Gastrocnemius medialis (tissue), 4 donors: ENCODE measurements at regions of chr4 and their contacts with region 1.

Region 1: DNA sequence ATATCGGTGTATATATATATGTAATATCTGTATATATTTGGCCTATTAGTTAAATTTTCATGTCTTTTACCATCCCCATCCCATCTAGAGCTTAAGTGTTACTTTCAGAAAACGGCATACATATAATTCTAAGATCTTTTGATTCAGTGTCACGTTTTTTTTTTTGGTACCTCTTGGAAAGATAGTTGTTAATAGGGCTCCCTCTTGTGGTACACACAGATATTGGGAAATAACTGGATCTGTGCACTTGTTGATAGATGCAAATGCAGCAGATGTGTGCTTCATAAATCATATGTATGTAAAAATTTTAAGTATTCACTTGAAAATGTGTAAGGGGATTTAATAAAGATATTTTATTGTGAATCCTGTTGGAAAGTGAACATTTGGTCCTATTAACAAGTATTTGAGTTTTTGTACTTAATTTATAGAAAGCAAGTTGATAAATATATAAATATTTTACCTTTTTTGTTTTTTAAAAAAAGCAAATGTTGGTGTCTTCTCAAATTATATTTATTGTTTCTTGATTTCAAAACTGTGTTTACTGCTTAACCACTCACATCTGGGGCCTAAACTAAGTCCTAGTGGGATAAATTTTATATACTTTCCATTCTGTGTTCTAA is 74.7 kb downstream of the PAQR3 start:
- DNase-seq: no peak
- ATAC-seq: peak; percentile 65 to 66
- H3K4me3 ChIP-seq: no peak overlapping the region
- H3K27ac ChIP-seq: no peak overlapping the region
- H3K4me1 ChIP-seq: no peaks in the 10 kb centered on the region
- H3K27me3 ChIP-seq: no peaks in the 10 kb centered on the region
- CTCF ChIP-seq: peak; percentile 63 to 80 (median 71)
- POLR2A ChIP-seq: no peak

Region 2: DNA sequence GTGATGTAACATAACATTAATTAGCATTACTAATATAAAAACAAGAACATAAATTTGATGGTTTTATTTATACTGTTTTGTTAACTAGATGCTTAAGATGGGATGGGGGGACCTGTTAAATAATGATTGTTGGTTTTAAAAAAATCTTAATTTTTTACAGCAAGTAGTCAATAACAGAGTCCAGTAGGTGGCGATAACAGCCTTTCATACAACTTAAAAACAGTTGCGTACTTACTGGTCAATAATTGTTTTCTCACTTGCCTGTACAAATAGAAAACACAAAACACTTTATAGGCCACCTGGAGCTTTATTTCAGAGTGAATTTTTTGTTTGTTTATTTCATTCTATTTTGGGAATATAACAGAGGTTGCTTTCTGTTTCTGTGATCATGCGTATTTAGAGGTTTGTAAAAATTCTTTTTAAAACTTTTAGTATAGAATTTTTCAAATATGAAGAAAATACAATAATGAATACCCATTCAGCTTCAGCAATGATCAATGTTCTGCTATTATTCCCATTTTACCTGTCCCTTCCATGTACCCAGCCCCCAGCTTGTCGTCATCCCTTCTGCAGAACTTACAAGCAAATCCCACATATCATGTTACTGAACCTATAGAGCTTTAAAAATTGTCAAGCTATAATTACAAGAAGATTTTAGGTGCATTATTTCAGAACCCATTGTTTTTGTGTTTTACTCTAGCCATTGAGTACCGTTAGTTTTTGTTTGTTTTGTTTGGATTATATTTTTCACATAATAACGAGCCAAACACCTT is 904.8 kb before region 1 on chr4:
- in situ Hi-C with region 1: loop called in 3 of 4 experiments (anchors 25 kb)
- intact Hi-C with region 1: loop called (anchors 5 kb)
- DNase-seq: no peak
- ATAC-seq: peak in 1 of 2 donors; percentile 62
- H3K4me3 ChIP-seq: peak overlapping the region; percentile 9 to 50 (median 41)
- H3K27ac ChIP-seq: no peak overlapping the region
- H3K4me1 ChIP-seq: peaks cover 0 to 7% of the 10 kb centered on the region in 2 donors
- H3K27me3 ChIP-seq: no peaks in the 10 kb centered on the region
- CTCF ChIP-seq: peak; percentile 46 to 73 (median 66)
- POLR2A ChIP-seq: no peak

Region 3: DNA sequence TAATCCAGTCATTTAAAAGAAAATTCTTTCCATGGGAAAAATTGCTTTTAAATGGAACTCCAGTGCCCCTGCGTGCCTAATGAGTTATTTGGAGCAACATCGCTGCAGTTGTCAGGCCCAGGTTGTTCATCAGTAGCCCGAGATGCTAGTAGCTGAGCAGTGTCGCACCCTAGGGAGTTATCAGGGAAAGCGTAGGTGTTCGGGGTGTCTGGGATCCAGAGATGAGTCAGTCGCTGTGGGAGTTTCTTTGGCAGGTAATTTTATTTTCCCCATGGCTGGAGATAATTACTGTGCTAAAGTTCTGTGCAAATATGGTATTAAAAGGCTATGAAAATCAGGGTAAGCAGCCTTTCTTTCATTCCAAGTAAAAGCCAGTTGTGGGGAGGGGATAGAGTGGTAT is 263.5 kb before region 1 on chr4:
- in situ Hi-C with region 1: loop called in 1 of 4 experiments (anchors 10 kb)
- intact Hi-C with region 1: no loop called
- DNase-seq: no peak
- ATAC-seq: no peak
- H3K4me3 ChIP-seq: no peak overlapping the region
- H3K27ac ChIP-seq: no peak overlapping the region
- H3K4me1 ChIP-seq: no peaks in the 10 kb centered on the region
- H3K27me3 ChIP-seq: no peaks in the 10 kb centered on the region
- CTCF ChIP-seq: no peak
- POLR2A ChIP-seq: no peak

Region 4: GRCh38 chr4:78612398-78613178 is 251.9 kb before region 1 on chr4:
- in situ Hi-C with region 1: loop called (anchors 5 to 10 kb)
- intact Hi-C with region 1: loop called (anchors 1 kb)
- DNase-seq: no peak
- ATAC-seq: peak in 1 of 2 donors; percentile 65
- H3K4me3 ChIP-seq: no peak overlapping the region
- H3K27ac ChIP-seq: no peak overlapping the region
- H3K4me1 ChIP-seq: no peaks in the 10 kb centered on the region
- H3K27me3 ChIP-seq: no peaks in the 10 kb centered on the region
- CTCF ChIP-seq: peak in 4 of 5 experiments; percentile 35 to 58 (median 50)
- POLR2A ChIP-seq: no peak

Region 5: GRCh38 chr4:78644744-78645330 is 219.7 kb before region 1 on chr4:
- in situ Hi-C with region 1: no loop called
- intact Hi-C with region 1: loop called (anchors 10 kb)
- DNase-seq: peak in 1 of 2 donors; percentile 59
- ATAC-seq: peak; percentile 65 to 81
- H3K4me3 ChIP-seq: no peak overlapping the region
- H3K27ac ChIP-seq: peak overlapping the region; percentile 60 to 84 (median 74)
- H3K4me1 ChIP-seq: peaks cover 8 to 28% of the 10 kb centered on the region in 2 donors
- H3K27me3 ChIP-seq: no peaks in the 10 kb centered on the region
- CTCF ChIP-seq: peak; percentile 55 to 82 (median 76)
- POLR2A ChIP-seq: no peak

Region 6: DNA sequence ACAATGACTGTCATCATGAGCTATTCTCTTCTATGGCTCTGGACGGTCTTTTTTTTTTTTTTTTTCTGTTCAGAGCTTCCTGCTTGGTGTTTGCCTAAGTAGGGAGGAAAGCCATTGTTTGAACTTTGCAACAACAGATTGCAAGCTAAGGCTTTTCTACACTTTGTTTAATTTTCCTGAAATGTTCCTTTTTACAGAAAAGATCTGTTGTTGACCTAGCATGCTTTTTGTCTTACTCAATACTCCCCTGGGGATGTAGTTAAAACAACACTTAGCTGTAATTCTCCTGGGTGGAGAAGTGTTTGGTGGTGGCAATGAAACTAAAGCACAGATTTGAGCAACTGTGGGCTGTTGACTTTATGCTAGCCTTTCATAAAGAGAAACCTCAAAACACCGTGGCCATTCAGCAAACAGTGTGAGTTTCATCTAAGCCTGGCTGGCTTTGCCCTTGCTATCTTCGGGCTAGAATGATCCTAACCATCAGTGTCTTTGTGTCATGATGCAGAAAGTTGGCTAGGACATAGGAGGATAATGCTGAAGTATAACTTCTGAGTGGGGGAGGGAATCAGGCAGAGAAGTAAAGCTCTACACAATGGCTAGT is 202.5 kb before region 1 on chr4:
- in situ Hi-C with region 1: no loop called
- intact Hi-C with region 1: no loop called
- DNase-seq: no peak
- ATAC-seq: peak in 1 of 2 donors; percentile 36
- H3K4me3 ChIP-seq: peak overlapping the region in 1 of 4 donors; percentile 38
- H3K27ac ChIP-seq: peak overlapping the region in 2 of 4 donors; percentile 36 to 51
- H3K4me1 ChIP-seq: peaks cover 4 to 5% of the 10 kb centered on the region in 2 donors
- H3K27me3 ChIP-seq: no peaks in the 10 kb centered on the region
- CTCF ChIP-seq: no peak
- POLR2A ChIP-seq: no peak

Region 7: GRCh38 chr4:78899302-78899701 is 34.8 kb after region 1 on chr4:
- in situ Hi-C with region 1: no loop called
- intact Hi-C with region 1: no loop called
- DNase-seq: no peak
- ATAC-seq: no peak
- H3K4me3 ChIP-seq: no peak overlapping the region
- H3K27ac ChIP-seq: no peak overlapping the region
- H3K4me1 ChIP-seq: no peaks in the 10 kb centered on the region
- H3K27me3 ChIP-seq: no peaks in the 10 kb centered on the region
- CTCF ChIP-seq: no peak
- POLR2A ChIP-seq: no peak